Activated B cell treated with CpG ODN at 0.5 μM for 24 hours (primary cell): ENCODE measurements at regions of chr10 and their contacts with region 1.

Region 1: GRCh38 chr10:18104223-18104872 is 35.9 kb upstream of the CACNB2 start:
- DNase-seq: no peak
- ATAC-seq: no peak
- H3K4me3 Mint-ChIP-seq: no peak overlapping the region
- H3K27ac Mint-ChIP-seq: no peak overlapping the region
- H3K4me1 Mint-ChIP-seq: no peaks in the 10 kb centered on the region
- H3K27me3 Mint-ChIP-seq: no peaks in the 10 kb centered on the region
- CTCF ChIP-seq: no peak

Region 2: GRCh38 chr10:17805921-17806577 is 298.3 kb before region 1 on chr10:
- CTCF ChIA-PET with region 1: no interaction called
- POLR2A ChIA-PET with region 1: no interaction called
- intact Hi-C with region 1: loop called (anchors 1 kb)
- DNase-seq: no peak
- ATAC-seq: peak; percentile 73
- H3K4me3 Mint-ChIP-seq: no peak overlapping the region
- H3K27ac Mint-ChIP-seq: no peak overlapping the region
- H3K4me1 Mint-ChIP-seq: peaks cover 17% of the 10 kb centered on the region
- H3K27me3 Mint-ChIP-seq: peaks cover 14% of the 10 kb centered on the region
- CTCF ChIP-seq: no peak

Region 3: DNA sequence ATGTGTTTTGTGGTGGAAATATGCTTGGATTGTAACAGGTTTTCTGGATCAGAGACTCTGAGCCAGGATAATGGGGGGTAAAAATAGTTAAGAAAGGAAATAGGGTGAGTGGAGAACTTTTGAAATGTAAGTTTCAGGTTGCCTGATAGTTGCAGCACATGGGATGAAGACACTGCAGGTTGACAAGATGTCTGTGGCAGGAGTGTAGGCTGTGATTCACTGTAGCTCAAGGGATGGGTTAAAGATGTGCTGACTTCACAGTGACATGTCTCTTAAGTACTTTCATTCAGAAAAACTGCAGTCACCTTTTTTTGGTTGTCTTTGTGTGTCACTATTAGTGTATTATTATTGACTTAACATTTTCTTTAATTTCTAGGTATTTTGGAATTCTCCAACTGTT is 216.2 kb before region 1 on chr10:
- CTCF ChIA-PET with region 1: no interaction called
- POLR2A ChIA-PET with region 1: no interaction called
- intact Hi-C with region 1: no loop called
- DNase-seq: no peak
- ATAC-seq: no peak
- H3K4me3 Mint-ChIP-seq: no peak overlapping the region
- H3K27ac Mint-ChIP-seq: no peak overlapping the region
- H3K4me1 Mint-ChIP-seq: no peaks in the 10 kb centered on the region
- H3K27me3 Mint-ChIP-seq: no peaks in the 10 kb centered on the region
- CTCF ChIP-seq: no peak

Region 4: GRCh38 chr10:18122753-18123152 is 18.4 kb after region 1 on chr10:
- CTCF ChIA-PET with region 1: no interaction called
- POLR2A ChIA-PET with region 1: no interaction called
- intact Hi-C with region 1: no loop called
- DNase-seq: no peak
- ATAC-seq: no peak
- H3K4me3 Mint-ChIP-seq: no peak overlapping the region
- H3K27ac Mint-ChIP-seq: no peak overlapping the region
- H3K4me1 Mint-ChIP-seq: no peaks in the 10 kb centered on the region
- H3K27me3 Mint-ChIP-seq: no peaks in the 10 kb centered on the region
- CTCF ChIP-seq: no peak